ENCODE measurements at regions of chr10 and their contacts with region 1.

Region 1: DNA sequence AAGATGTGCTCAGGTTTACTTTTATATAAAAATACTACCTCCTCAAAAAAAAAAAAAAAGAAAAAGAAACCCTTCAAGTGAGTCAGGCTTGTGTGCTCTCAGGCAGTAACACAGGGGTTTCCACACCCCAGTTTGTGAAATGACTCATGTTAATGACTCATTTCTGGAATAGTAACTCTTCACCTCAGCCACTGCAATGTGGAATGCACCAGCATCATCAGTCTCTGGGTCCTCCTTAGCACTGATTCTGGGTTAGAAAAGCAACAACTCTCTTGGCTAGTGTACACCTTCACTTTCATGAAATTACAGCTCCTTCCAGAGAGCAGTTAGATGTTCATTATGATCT is 110.6 kb downstream of the EMX2 start:
- DNase-seq: peak; percentile 83
- ATAC-seq: peak; percentile 97
- H3K4me3 ChIP-seq: no peak overlapping the region
- H3K27ac ChIP-seq: peak overlapping the region; percentile 4; the same call in 1 of the 2 replicates
- H3K4me1 ChIP-seq: peaks cover 10 to 16% of the 10 kb centered on the region in 2 experiments
- H3K27me3 ChIP-seq: no peaks in the 10 kb centered on the region
- CTCF ChIP-seq: no peak
- POLR2A ChIP-seq: no peak
- RAD21 ChIP-seq: peak; percentile 14; the same call in 1 of the 2 replicates

Region 2: DNA sequence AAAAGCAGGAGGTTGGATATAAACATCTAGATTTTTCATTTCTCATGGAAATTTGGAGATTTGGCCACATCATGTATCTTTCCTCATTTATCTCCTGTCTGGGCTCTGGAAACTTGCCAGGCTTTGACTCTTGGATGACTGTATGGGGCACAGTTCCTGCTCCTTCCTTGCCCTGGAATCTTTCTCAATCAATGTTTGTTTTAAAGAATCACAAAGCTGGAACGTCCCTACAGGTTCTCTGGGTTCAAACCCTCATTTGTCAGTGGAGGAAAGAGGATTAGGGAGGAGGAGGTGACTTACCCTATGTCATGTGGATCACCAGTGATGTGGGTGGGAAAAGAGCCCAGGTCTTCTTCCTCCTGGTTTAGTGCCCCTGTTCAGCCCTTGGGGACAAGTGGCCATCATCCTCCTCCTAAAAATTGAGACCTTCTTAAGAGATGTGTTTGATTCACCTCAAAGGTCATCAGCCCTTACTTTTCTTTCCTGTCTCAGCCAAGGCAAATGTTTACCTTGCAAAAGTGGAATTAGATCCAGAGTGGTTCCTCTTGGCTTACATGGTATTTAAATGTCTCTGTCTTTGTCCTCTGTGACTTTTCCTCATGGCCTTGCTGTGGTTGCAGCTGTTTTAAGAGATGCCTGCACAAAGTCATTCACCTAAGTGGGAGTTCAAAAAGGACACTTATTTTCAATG is 239.1 kb before region 1 on chr10:
- CTCF ChIA-PET with region 1: no interaction called
- POLR2A ChIA-PET with region 1: no interaction called
- RAD21 ChIA-PET with region 1: no interaction called
- intact Hi-C with region 1: no loop called
- DNase-seq: no peak
- ATAC-seq: no peak
- H3K4me3 ChIP-seq: no peak overlapping the region
- H3K27ac ChIP-seq: no peak overlapping the region
- H3K4me1 ChIP-seq: no peaks in the 10 kb centered on the region
- H3K27me3 ChIP-seq: peaks cover 18% of the 10 kb centered on the region; the same call in 1 of the 2 replicates
- CTCF ChIP-seq: no peak
- POLR2A ChIP-seq: no peak
- RAD21 ChIP-seq: no peak

Region 3: DNA sequence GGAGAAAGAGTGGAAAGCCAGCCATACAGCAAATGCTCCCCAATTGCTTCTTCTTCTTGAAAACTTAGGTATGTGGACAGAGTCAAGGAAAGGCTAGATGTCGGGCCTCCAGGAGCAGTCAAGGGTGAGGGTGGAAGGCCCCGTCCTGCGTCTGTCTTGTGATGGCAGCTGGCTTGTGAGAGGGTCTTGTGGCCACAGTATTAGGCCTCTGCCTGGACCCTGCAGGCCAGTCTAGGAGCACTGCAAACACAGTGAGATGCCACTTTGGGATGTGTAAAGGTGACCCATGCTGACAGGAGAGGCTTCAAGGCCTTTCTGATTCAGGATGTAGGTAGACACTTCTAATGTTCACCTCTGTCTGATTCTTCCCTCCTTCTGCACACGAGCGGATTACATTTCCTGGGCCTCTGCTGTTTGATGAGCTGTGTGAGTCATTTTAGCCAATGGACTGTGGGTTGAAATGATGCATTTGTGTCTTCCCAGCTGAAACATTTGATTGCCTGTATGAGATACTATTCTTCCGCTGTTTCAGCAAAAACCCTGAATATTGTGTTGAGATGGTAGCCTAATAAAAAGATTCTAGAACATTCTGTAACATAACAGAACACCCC is 24.9 kb after region 1 on chr10:
- CTCF ChIA-PET with region 1: no interaction called
- POLR2A ChIA-PET with region 1: no interaction called
- RAD21 ChIA-PET with region 1: no interaction called
- intact Hi-C with region 1: loop called (anchors 1 kb)
- DNase-seq: no peak
- ATAC-seq: peak; percentile 22
- H3K4me3 ChIP-seq: no peak overlapping the region
- H3K27ac ChIP-seq: no peak overlapping the region
- H3K4me1 ChIP-seq: peaks cover 7 to 29% of the 10 kb centered on the region in 2 experiments; a peak in 3 of 4 replicates
- H3K27me3 ChIP-seq: no peaks in the 10 kb centered on the region
- CTCF ChIP-seq: no peak
- POLR2A ChIP-seq: no peak
- RAD21 ChIP-seq: no peak

Measured in HCT116 (cell line).